Ascending aorta (tissue), 2 donors: ENCODE measurements at regions of chr11 and their contacts with region 1.

Region 1: GRCh38 chr11:108467091-108467823 is at the start of gene C11orf65:
- DNase-seq: peak; percentile 85 to 98
- H3K4me3 ChIP-seq: peak within 1 kb of the TSS; percentile 73 to 74
- H3K27ac ChIP-seq: peak within 1 kb of the TSS; percentile 97
- H3K4me1 ChIP-seq: peaks cover 0 to 7% of the 10 kb centered on the region in 2 donors
- H3K27me3 ChIP-seq: no peaks in the 10 kb centered on the region
- CTCF ChIP-seq: no peak
- total RNA-seq, gene C11orf65: not detected

Region 2: GRCh38 chr11:108121274-108122155 is 345.7 kb before region 1 on chr11 and contains the start of gene ACAT1:
- intact Hi-C with region 1: loop called (anchors 5 kb)
- DNase-seq: peak; percentile 96 to 99
- H3K4me3 ChIP-seq: peak within 1 kb of the TSS; percentile 84 to 92
- H3K27ac ChIP-seq: peak within 1 kb of the TSS; percentile 96 to 97
- H3K4me1 ChIP-seq: peaks cover 0 to 20% of the 10 kb centered on the region in 2 donors
- H3K27me3 ChIP-seq: no peaks in the 10 kb centered on the region
- CTCF ChIP-seq: peak in 2 of 3 experiments; percentile 9 to 39
- total RNA-seq, gene ACAT1: 187 TPM

Region 3: GRCh38 chr11:108338775-108339174 is 128.5 kb before region 1 on chr11:
- intact Hi-C with region 1: no loop called
- DNase-seq: no peak
- H3K4me3 ChIP-seq: no peak overlapping the region
- H3K27ac ChIP-seq: no peak overlapping the region
- H3K4me1 ChIP-seq: no peaks in the 10 kb centered on the region
- H3K27me3 ChIP-seq: no peaks in the 10 kb centered on the region
- CTCF ChIP-seq: no peak

Region 4: GRCh38 chr11:108593214-108593922 is 126.1 kb after region 1 on chr11 and contains the start of gene EXPH5:
- intact Hi-C with region 1: loop called (anchors 2 kb)
- DNase-seq: peak; percentile 53 to 90
- H3K4me3 ChIP-seq: peak within 1 kb of the TSS; percentile 73 to 81
- H3K27ac ChIP-seq: peak within 1 kb of the TSS; percentile 9 to 52
- H3K4me1 ChIP-seq: no peaks in the 10 kb centered on the region
- H3K27me3 ChIP-seq: no peaks in the 10 kb centered on the region
- CTCF ChIP-seq: no peak
- total RNA-seq, gene EXPH5: 1.1 TPM

Region 5: DNA sequence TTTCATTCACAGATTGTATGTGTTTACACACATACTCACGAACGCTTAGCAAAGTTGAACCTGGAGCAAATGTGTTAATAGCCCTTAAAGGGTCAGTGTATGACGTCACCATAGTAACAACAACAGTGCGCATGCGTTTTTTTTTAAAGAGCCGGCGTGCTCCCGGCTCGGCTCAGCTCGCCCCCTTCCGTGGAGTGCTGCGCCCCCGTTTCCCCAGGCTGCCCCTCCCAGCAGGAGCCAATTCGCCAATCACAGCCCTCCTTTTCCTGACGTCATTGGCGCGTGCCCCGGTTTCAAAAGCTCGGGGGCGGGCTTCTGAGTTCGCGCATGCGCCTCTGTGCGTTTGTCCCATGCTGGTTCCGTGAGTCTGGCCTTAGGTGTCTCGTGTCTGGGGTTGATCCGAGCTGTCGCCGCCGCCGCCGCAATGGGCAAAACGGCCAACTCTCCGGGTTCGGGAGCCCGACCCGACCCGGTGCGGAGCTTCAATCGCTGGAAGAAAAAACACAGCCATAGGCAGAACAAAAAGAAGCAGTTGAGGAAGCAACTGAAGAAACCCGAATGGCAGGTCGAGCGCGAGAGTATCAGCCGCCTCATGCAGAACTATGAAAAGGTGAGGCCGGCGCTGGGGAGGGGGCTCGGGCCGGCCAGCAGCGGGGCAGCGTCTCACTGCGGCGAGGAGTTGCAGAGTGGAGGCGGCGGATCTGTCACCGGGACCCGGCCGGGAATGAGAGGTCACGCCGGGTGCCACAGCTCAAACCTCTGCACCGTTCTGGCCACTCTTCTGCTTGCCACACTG is 197.7 kb after region 1 on chr11 and contains the start of gene DDX10:
- intact Hi-C with region 1: loop called (anchors 1 kb)
- DNase-seq: peak; percentile 87 to 99
- H3K4me3 ChIP-seq: peak within 1 kb of the TSS; percentile 63 to 88
- H3K27ac ChIP-seq: peak within 1 kb of the TSS; percentile 37 to 65
- H3K4me1 ChIP-seq: peaks cover 8 to 21% of the 10 kb centered on the region in 2 donors
- H3K27me3 ChIP-seq: no peaks in the 10 kb centered on the region
- CTCF ChIP-seq: no peak
- total RNA-seq, gene DDX10: 21.9 TPM